ENCODE measurements at regions of chr3 and their contacts with region 1.

Region 1: GRCh38 chr3:125622381-125622788 is 27.1 kb upstream of the OSBPL11 start:
- DNase-seq: peak; percentile 20 to 90 (median 69)
- ATAC-seq: peak; percentile 96 to 99 (median 98)
- H3K4me3 ChIP-seq: no peak overlapping the region
- H3K27ac ChIP-seq: peak overlapping the region in 11 of 12 donors; percentile 20 to 81 (median 64)
- H3K4me1 ChIP-seq: peaks cover 0 to 9% (median 0%) of the 10 kb centered on the region in 12 donors
- H3K27me3 ChIP-seq: no peaks in the 10 kb centered on the region
- CTCF ChIP-seq: no peak
- POLR2A ChIP-seq: no peak

Region 2: GRCh38 chr3:125556314-125556713 is 66.1 kb before region 1 on chr3:
- intact Hi-C with region 1: no loop called
- DNase-seq: no peak
- ATAC-seq: no peak
- H3K4me3 ChIP-seq: no peak overlapping the region
- H3K27ac ChIP-seq: no peak overlapping the region
- H3K4me1 ChIP-seq: no peaks in the 10 kb centered on the region
- H3K27me3 ChIP-seq: no peaks in the 10 kb centered on the region
- CTCF ChIP-seq: no peak
- POLR2A ChIP-seq: no peak

Region 3: GRCh38 chr3:125594581-125595011 is 27.8 kb before region 1 on chr3:
- intact Hi-C with region 1: loop called in 1 of 10 experiments (anchors 1 kb)
- DNase-seq: peak in 2 of 5 donors; percentile 16 to 40
- ATAC-seq: no peak
- H3K4me3 ChIP-seq: peak overlapping the region; percentile 55 to 94 (median 77)
- H3K27ac ChIP-seq: peak overlapping the region; percentile 84 to 99 (median 96)
- H3K4me1 ChIP-seq: peaks cover 3 to 49% (median 31%) of the 10 kb centered on the region in 12 donors
- H3K27me3 ChIP-seq: no peaks in the 10 kb centered on the region
- CTCF ChIP-seq: no peak
- POLR2A ChIP-seq: no peak

Measured in heart left ventricle (tissue), 16 donors.